ENCODE measurements at regions of chr4 and their contacts with region 1.

Region 1: GRCh38 chr4:80462621-80463091 is 127.1 kb downstream of the CFAP299 start:
- DNase-seq: peak in 5 of 9 donors; percentile 11 to 39 (median 21)
- ATAC-seq: no peak
- H3K4me3 ChIP-seq: peak overlapping the region; percentile 50
- H3K4me3 Mint-ChIP-seq: peak overlapping the region; percentile 22 to 88 (median 82)
- H3K27ac ChIP-seq: peak overlapping the region; percentile 29
- H3K27ac Mint-ChIP-seq: peak overlapping the region; percentile 65 to 93 (median 84)
- H3K4me1 ChIP-seq: peaks cover 0 to 12% of the 10 kb centered on the region in 2 donors
- H3K4me1 Mint-ChIP-seq: peaks cover 6 to 58% (median 40%) of the 10 kb centered on the region in 7 donors
- H3K27me3 ChIP-seq: no peaks in the 10 kb centered on the region
- H3K27me3 Mint-ChIP-seq: no peaks in the 10 kb centered on the region

Region 2: GRCh38 chr4:80475798-80476197 is 13.1 kb after region 1 on chr4:
- CTCF ChIA-PET with region 1: no interaction called
- POLR2A ChIA-PET with region 1: interaction called, 3 read pairs
- intact Hi-C with region 1: loop called in 1 of 2 experiments (anchors 1 kb)
- DNase-seq: no peak
- ATAC-seq: peak; percentile 12
- H3K4me3 ChIP-seq: no peak overlapping the region
- H3K4me3 Mint-ChIP-seq: no peak overlapping the region
- H3K27ac ChIP-seq: no peak overlapping the region
- H3K27ac Mint-ChIP-seq: peak overlapping the region in 2 of 9 donors; percentile 13 to 17
- H3K4me1 ChIP-seq: no peaks in the 10 kb centered on the region
- H3K4me1 Mint-ChIP-seq: peaks cover 0 to 15% (median 9%) of the 10 kb centered on the region in 7 donors
- H3K27me3 ChIP-seq: no peaks in the 10 kb centered on the region
- H3K27me3 Mint-ChIP-seq: no peaks in the 10 kb centered on the region

Region 3: GRCh38 chr4:80500613-80501012 is 38.0 kb after region 1 on chr4:
- CTCF ChIA-PET with region 1: interaction called, 11 read pairs
- POLR2A ChIA-PET with region 1: interaction called, 3 read pairs
- intact Hi-C with region 1: loop called in 1 of 2 experiments (anchors 2 kb)
- DNase-seq: peak in 7 of 9 donors; percentile 24 to 81 (median 71)
- ATAC-seq: peak; percentile 96
- H3K4me3 ChIP-seq: peak overlapping the region; percentile 1
- H3K4me3 Mint-ChIP-seq: peak overlapping the region in 8 of 10 donors; percentile 1 to 67 (median 54)
- H3K27ac ChIP-seq: no peak overlapping the region
- H3K27ac Mint-ChIP-seq: peak overlapping the region in 8 of 9 donors; percentile 60 to 88 (median 81)
- H3K4me1 ChIP-seq: peaks cover 23 to 42% of the 10 kb centered on the region in 2 donors
- H3K4me1 Mint-ChIP-seq: peaks cover 9 to 81% (median 71%) of the 10 kb centered on the region in 7 donors
- H3K27me3 ChIP-seq: no peaks in the 10 kb centered on the region
- H3K27me3 Mint-ChIP-seq: peaks cover 0 to 3% (median 0%) of the 10 kb centered on the region in 5 donors

Region 4: GRCh38 chr4:80803337-80803736 is 340.7 kb after region 1 on chr4:
- CTCF ChIA-PET with region 1: no interaction called
- POLR2A ChIA-PET with region 1: no interaction called
- intact Hi-C with region 1: loop called in 1 of 2 experiments (anchors 10 kb)
- DNase-seq: no peak
- ATAC-seq: no peak
- H3K4me3 ChIP-seq: no peak overlapping the region
- H3K4me3 Mint-ChIP-seq: no peak overlapping the region
- H3K27ac ChIP-seq: no peak overlapping the region
- H3K27ac Mint-ChIP-seq: no peak overlapping the region
- H3K4me1 ChIP-seq: no peaks in the 10 kb centered on the region
- H3K4me1 Mint-ChIP-seq: peaks cover 0 to 20% (median 3%) of the 10 kb centered on the region in 7 donors
- H3K27me3 ChIP-seq: no peaks in the 10 kb centered on the region
- H3K27me3 Mint-ChIP-seq: no peaks in the 10 kb centered on the region

Region 5: GRCh38 chr4:81040012-81040659 is 577.5 kb after region 1 on chr4:
- CTCF ChIA-PET with region 1: no interaction called
- POLR2A ChIA-PET with region 1: no interaction called
- intact Hi-C with region 1: loop called in 1 of 2 experiments (anchors 1 kb)
- DNase-seq: peak in 6 of 9 donors; percentile 26 to 54 (median 52)
- ATAC-seq: peak; percentile 47
- H3K4me3 ChIP-seq: no peak overlapping the region
- H3K4me3 Mint-ChIP-seq: no peak overlapping the region
- H3K27ac ChIP-seq: no peak overlapping the region
- H3K27ac Mint-ChIP-seq: no peak overlapping the region
- H3K4me1 ChIP-seq: no peaks in the 10 kb centered on the region
- H3K4me1 Mint-ChIP-seq: no peaks in the 10 kb centered on the region
- H3K27me3 ChIP-seq: no peaks in the 10 kb centered on the region
- H3K27me3 Mint-ChIP-seq: peaks cover 10 to 28% (median 20%) of the 10 kb centered on the region in 5 donors